ENCODE measurements at regions of chr12 and their contacts with region 1.

Region 1: GRCh38 chr12:80857311-80857710 is 80.4 kb downstream of the LIN7A start:
- H3K4me3 ChIP-seq: no peak overlapping the region
- H3K27ac ChIP-seq: no peak overlapping the region
- H3K4me1 ChIP-seq: peaks cover 9% of the 10 kb centered on the region; the same call in 1 of the 2 replicates
- CTCF ChIP-seq: no peak

Region 2: DNA sequence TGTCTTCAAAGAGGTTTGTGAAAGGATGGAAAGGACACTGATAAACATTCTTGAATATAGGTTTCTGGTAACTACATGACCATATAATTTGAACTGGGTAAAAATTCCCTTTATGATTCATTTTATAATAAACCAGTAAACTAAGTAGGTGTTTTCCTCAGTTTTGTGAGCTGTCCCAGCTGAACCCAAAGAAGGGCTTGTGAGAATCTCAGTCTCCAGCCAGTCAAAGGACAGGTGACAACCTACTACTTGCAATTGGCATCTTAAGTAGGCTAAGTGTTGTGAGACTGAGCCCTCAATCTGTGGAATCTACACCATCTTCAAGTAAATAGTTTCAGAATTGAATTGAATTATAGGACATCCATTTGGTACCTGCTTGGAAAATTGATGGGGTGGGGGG is 65.4 kb before region 1 on chr12:
- CTCF ChIA-PET with region 1: no interaction called
- POLR2A ChIA-PET with region 1: no interaction called
- H3K4me3 ChIP-seq: no peak overlapping the region
- H3K27ac ChIP-seq: no peak overlapping the region
- H3K4me1 ChIP-seq: no peaks in the 10 kb centered on the region
- CTCF ChIP-seq: no peak

Region 3: GRCh38 chr12:80837348-80837985 is 19.8 kb before region 1 on chr12:
- CTCF ChIA-PET with region 1: interaction called, 16 read pairs
- POLR2A ChIA-PET with region 1: no interaction called
- H3K4me3 ChIP-seq: no peak overlapping the region
- H3K27ac ChIP-seq: no peak overlapping the region
- H3K4me1 ChIP-seq: no peaks in the 10 kb centered on the region
- CTCF ChIP-seq: peak; percentile 18; the same call in 1 of the 2 replicates